ENCODE measurements at regions of chr13 and their contacts with region 1.

Region 1: DNA sequence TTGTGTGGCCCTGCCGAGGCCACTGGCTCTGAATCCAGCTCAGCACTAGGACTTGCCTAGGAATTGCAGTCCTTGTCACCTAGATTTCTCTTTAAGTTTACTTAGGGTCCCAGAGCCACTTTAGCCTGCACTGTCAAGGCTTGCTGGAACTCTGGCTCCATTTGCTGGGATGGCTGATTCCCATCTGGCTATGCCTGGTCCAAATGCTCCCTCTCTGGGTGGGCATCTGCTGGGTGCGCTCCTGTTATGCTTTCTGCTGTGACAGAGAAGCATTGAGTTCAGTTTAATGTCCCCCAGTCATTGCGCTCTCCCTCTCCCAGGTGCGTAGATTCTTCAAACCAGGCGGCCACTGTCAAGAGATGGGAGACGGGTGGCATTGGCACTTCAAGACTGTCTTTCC is 102.2 kb downstream of the MTUS2 start:
- DNase-seq: no peak
- H3K4me3 ChIP-seq: no peak overlapping the region
- H3K27ac ChIP-seq: no peak overlapping the region
- H3K4me1 ChIP-seq: no peaks in the 10 kb centered on the region
- H3K27me3 ChIP-seq: no peaks in the 10 kb centered on the region
- CTCF ChIP-seq: no peak

Region 2: DNA sequence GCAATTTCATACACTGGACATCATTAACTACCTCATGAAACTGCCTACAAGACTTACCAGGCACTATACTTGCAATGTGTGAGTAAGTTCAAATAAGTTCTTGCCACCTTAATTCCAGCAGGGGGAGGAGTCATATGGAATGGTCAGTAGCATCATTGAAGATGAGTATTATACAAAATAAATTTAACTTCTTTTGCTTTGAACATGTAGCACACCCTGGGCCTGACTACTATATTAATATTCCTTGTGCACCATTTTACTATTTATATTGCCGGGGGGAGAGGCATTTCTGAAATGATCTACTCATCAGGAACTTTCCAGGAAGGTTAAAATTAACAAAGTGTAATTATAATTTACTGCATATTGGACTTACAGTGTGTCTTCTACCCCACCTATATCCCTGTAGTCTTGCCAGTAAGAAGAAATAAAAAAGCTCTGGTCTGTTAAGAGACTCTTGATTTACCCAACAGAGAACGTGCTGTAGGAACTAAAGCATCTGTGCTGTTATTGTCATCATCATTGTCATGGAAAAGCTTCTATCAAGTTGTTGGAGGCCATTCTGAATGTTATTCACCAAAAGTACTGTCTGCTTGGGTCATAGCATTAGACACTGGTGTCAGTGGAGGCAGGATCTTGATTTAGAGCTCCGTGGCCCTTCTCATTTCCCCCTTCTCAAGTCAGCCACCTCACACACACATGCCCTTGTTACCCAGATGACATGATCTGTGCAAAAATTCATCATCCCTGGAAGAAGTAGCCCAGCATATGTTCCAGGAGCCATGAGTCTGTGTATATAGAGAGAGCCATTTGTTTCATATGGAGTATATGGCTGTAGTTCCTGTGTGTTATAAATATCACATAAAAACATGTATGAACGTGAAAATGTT is 44.9 kb after region 1 on chr13:
- CTCF ChIA-PET with region 1: interaction called, 3 read pairs
- dilution Hi-C with region 1: loop called (anchors 5 kb)
- in situ Hi-C with region 1: no loop called
- intact Hi-C with region 1: no loop called
- DNase-seq: no peak
- H3K4me3 ChIP-seq: no peak overlapping the region
- H3K27ac ChIP-seq: no peak overlapping the region
- H3K4me1 ChIP-seq: no peaks in the 10 kb centered on the region
- H3K27me3 ChIP-seq: no peaks in the 10 kb centered on the region
- CTCF ChIP-seq: no peak

Region 3: GRCh38 chr13:29154390-29154789 is 232.0 kb after region 1 on chr13:
- CTCF ChIA-PET with region 1: no interaction called
- dilution Hi-C with region 1: no loop called
- in situ Hi-C with region 1: no loop called
- intact Hi-C with region 1: no loop called
- DNase-seq: no peak
- H3K4me3 ChIP-seq: no peak overlapping the region
- H3K27ac ChIP-seq: no peak overlapping the region
- H3K4me1 ChIP-seq: no peaks in the 10 kb centered on the region
- H3K27me3 ChIP-seq: no peaks in the 10 kb centered on the region
- CTCF ChIP-seq: no peak

Measured in mammary epithelial cell (primary cell).